Left ventricle myocardium inferior (tissue), 1 donor: ENCODE measurements at regions of chr2 and their contacts with region 1.

Region 1: DNA sequence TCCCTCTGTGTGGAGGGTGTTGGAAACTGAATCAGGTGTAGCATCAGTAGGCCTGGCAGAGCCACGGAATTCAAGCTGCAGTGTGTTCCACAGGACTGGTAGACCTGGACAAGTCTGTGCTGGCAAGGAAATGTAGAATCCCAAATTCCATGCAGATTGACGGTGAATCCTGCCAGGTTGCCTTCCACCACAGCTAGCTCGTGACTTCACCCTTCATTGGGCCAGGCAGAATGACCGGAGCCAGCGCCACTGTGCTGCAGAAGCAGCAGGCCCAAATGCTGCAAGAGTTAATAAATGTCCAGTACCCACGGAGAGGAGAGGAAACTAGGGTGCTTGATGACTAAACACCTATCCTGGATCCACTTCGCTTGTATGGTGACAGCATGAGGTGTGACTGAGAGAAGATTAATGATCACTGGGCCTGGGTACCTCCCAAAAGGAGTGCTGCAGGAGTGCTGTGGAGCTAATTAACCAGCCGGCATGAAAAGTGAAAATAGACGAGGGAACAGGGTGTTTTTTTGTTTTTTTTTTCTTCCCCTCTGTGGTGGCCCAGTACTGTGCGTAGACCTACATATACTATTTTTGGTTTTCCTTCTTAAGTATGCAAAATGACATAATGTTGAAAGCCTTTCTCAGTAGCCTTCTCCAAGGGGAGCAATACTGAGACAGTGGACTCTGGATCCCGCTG is 122.2 kb downstream of the TANC1 start:
- DNase-seq: no peak
- H3K4me3 ChIP-seq: peak overlapping the region; percentile 20
- H3K27ac ChIP-seq: peak overlapping the region; percentile 84
- H3K4me1 ChIP-seq: peaks cover 98% of the 10 kb centered on the region
- H3K27me3 ChIP-seq: no peaks in the 10 kb centered on the region
- CTCF ChIP-seq: no peak

Region 2: DNA sequence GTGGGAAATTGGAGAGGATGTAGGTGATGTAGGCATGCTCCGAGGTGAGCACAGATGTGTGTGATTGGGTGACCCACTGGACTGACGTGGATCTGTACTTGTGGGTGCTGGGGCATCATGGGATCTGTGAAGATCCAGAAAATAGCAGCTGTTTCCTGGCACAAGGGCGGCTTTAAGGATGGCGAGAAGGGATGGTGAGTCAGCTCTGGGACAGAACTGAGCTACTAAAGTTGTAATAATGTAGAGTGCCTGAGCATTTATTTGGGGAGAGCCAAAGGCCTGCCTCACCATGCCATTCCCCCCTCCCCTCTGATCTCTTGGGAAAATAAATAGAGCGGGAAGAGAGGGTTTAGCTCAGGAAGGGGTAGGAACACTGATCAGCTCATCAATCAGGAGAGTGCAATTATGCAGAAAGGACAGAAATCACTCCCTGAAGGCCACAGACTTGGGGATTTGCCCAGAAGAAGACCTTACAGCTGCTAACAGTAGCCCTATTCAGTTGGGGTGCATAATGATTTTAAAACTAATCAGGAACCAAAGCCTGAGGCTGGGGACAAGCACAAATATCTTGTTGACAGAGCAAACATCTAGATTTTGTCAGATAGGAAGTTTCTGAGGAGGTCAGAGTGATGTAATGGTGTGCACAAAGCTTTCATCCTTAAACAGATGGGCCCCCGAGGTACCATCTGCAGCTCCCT is 92.0 kb before region 1 on chr2:
- intact Hi-C with region 1: loop called (anchors 10 kb)
- DNase-seq: no peak
- H3K4me3 ChIP-seq: no peak overlapping the region
- H3K27ac ChIP-seq: peak overlapping the region; percentile 32
- H3K4me1 ChIP-seq: peaks cover 96% of the 10 kb centered on the region
- H3K27me3 ChIP-seq: no peaks in the 10 kb centered on the region
- CTCF ChIP-seq: no peak

Region 3: GRCh38 chr2:159030674-159031380 is 59.8 kb before region 1 on chr2:
- intact Hi-C with region 1: no loop called
- DNase-seq: peak; percentile 58
- H3K4me3 ChIP-seq: no peak overlapping the region
- H3K27ac ChIP-seq: peak overlapping the region; percentile 89
- H3K4me1 ChIP-seq: peaks cover 82% of the 10 kb centered on the region
- H3K27me3 ChIP-seq: no peaks in the 10 kb centered on the region
- CTCF ChIP-seq: no peak

Region 4: GRCh38 chr2:159971365-159972122 is 880.9 kb after region 1 on chr2:
- intact Hi-C with region 1: no loop called
- DNase-seq: no peak
- H3K4me3 ChIP-seq: no peak overlapping the region
- H3K27ac ChIP-seq: no peak overlapping the region
- H3K4me1 ChIP-seq: peaks cover 3% of the 10 kb centered on the region
- H3K27me3 ChIP-seq: no peaks in the 10 kb centered on the region
- CTCF ChIP-seq: no peak